ENCODE measurements at regions of chr3 and their contacts with region 1.

Region 1: GRCh38 chr3:71504250-71505036 is 79.1 kb downstream of the FOXP1 start:
- DNase-seq: no peak
- H3K4me3 ChIP-seq: no peak overlapping the region
- H3K27ac ChIP-seq: peak overlapping the region in 1 of 2 donors; percentile 19
- H3K4me1 ChIP-seq: peaks cover 0 to 9% (median 2%) of the 10 kb centered on the region in 4 donors
- H3K27me3 ChIP-seq: no peaks in the 10 kb centered on the region
- CTCF ChIP-seq: no peak

Region 2: DNA sequence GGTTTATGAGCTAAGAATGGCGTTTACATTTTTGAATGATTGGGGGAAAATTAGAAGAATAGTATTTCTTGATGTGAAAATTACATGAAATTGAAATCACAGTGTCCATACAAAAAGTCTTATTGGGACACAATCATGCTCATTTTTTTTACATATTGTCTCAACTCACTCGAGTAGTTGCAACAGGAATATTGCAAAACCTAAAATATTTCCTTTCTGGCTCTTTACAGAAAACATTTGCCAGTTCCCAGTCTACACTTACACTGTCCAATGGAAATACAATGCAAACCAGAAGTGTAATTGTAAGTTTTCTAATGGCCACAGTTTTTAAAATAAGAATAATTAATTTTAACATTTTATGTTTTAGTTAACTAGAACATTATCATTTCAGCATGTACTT is 1367.1 kb before region 1 on chr3:
- intact Hi-C with region 1: loop called (anchors 5 kb)
- DNase-seq: no peak
- H3K4me3 ChIP-seq: no peak overlapping the region
- H3K27ac ChIP-seq: no peak overlapping the region
- H3K4me1 ChIP-seq: no peaks in the 10 kb centered on the region
- H3K27me3 ChIP-seq: no peaks in the 10 kb centered on the region
- CTCF ChIP-seq: no peak

Measured in tibial artery (tissue), 4 donors.